ENCODE measurements at regions of chr6 and their contacts with region 1.

Region 1: GRCh38 chr6:16409531-16410441 is 171.4 kb downstream of the GMPR start:
- DNase-seq: no peak
- H3K4me3 ChIP-seq: no peak overlapping the region
- H3K27me3 ChIP-seq: no peaks in the 10 kb centered on the region; the same call in 1 of the 2 replicates
- CTCF ChIP-seq: peak; percentile 93

Region 2: DNA sequence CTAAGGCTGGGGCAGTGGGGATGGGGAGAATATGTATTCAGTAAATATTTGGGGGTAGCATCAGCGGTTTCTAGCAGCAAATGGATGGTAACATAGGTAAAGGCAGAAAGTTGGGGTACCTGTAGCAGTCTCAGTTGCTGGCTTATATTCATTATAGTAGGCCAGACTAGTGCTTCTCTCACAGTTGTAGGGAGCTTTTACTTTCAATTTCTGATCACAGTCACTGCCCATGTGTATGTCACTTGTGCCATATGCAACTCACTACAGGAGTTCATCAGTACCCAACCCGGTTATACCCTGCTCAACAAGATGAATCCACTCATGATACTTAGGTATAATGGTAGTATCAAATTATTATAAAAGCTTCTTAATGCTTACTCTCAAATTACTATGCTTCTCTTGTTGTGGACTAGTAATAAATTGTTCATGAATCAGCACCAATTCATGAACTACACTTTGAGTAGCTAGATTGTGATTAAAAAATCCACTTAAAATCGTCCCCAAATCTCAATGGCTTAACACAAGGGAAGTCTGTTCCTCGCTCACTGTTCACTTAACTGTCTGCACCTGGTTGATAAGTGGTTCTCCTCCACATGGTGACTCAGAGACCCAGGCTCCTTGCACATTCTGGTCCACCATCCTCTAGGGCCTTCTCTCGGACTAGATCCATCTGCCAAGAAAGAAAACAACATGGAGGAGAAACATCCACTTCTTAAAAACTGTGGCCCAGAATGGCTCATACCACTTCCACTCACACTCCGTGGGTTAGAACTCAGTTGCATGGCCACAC is 312.2 kb before region 1 on chr6:
- CTCF ChIA-PET with region 1: no interaction called
- POLR2A ChIA-PET with region 1: no interaction called
- DNase-seq: no peak
- H3K4me3 ChIP-seq: no peak overlapping the region
- H3K27me3 ChIP-seq: no peaks in the 10 kb centered on the region; the same call in 1 of the 2 replicates
- CTCF ChIP-seq: no peak

Region 3: GRCh38 chr6:16332175-16332542 is 77.6 kb before region 1 on chr6:
- CTCF ChIA-PET with region 1: interaction called, 30 read pairs
- POLR2A ChIA-PET with region 1: no interaction called
- DNase-seq: no peak
- H3K4me3 ChIP-seq: no peak overlapping the region
- H3K27me3 ChIP-seq: no peaks in the 10 kb centered on the region
- CTCF ChIP-seq: peak; percentile 91

Region 4: GRCh38 chr6:16338577-16339262 is 71.1 kb before region 1 on chr6:
- CTCF ChIA-PET with region 1: interaction called, 30 read pairs
- POLR2A ChIA-PET with region 1: no interaction called
- DNase-seq: peak; percentile 98
- H3K4me3 ChIP-seq: no peak overlapping the region
- H3K27me3 ChIP-seq: no peaks in the 10 kb centered on the region
- CTCF ChIP-seq: peak; percentile 86

Region 5: GRCh38 chr6:16420715-16421461 is 11.1 kb after region 1 on chr6:
- CTCF ChIA-PET with region 1: interaction called, 19 read pairs
- POLR2A ChIA-PET with region 1: no interaction called
- DNase-seq: peak; percentile 96
- H3K4me3 ChIP-seq: no peak overlapping the region
- H3K27me3 ChIP-seq: no peaks in the 10 kb centered on the region
- CTCF ChIP-seq: no peak

Region 6: DNA sequence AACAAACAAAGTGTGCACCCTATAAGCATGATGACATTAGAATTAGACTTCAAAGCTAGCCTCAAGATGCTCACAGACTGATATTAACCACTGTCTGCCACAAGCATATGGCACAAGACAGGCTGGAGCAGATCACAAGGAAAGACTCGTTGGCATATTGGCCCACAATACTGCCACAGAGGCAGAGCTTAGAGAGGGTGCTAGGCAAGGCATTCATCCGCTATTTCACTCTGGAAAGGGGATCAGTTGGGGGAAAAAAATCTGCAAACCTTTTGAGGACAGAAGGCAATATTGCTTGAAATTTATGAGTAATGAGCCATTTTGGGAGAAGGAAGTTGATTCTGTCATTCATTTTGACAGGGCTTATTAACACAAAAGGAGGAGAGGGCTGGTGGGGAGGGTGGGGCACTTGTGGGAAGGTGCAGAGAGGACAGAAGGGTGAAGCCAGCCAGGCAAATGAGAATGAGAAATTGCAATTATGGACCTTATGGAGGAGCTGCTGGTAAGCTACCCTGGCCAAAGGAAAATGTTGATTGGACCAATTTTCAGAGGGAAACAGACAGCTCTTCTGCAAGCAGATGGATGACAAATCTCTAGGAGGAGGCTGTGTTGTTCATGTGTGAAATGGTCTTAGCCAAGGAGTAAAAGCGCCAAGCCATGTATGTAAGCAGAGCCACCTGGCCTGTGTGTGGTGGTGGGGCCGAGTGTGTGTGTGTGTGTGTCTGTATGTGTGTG is 16.3 kb after region 1 on chr6:
- CTCF ChIA-PET with region 1: interaction called, 19 read pairs
- POLR2A ChIA-PET with region 1: no interaction called
- DNase-seq: no peak
- H3K4me3 ChIP-seq: no peak overlapping the region
- H3K27me3 ChIP-seq: no peaks in the 10 kb centered on the region
- CTCF ChIP-seq: no peak

Measured in BJ (cell line).